ENCODE measurements at regions of chr6 and their contacts with region 1.

Region 1: GRCh38 chr6:158972241-158973233 is 27.5 kb downstream of the RSPH3 start:
- DNase-seq: peak; percentile 75
- ATAC-seq: peak; percentile 37
- H3K4me3 ChIP-seq: no peak overlapping the region
- H3K27ac ChIP-seq: no peak overlapping the region
- H3K4me1 ChIP-seq: peaks cover 4% of the 10 kb centered on the region; the same call in 1 of the 2 replicates
- H3K27me3 ChIP-seq: no peaks in the 10 kb centered on the region
- CTCF ChIP-seq: peak; percentile 66

Region 2: DNA sequence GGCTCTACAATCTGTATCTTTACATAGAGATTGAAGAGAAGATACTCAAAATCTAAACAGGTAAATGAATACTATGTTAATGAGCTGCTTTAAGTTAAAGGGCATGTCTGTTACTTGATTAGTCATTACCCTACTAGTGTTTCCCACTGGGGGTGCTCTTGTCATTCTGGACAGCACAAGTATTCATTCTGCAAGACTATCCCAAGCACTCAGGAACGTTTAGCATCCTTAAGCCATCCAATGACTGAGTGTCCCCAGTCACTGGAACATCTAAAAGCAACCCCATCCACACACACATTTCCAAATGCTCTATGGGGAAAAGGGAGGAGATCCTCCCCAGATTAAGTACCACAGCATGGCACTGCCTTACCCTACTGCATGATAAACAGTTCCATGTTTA is 179.1 kb before region 1 on chr6:
- CTCF ChIA-PET with region 1: interaction called, 3 read pairs
- POLR2A ChIA-PET with region 1: no interaction called
- intact Hi-C with region 1: loop called (anchors 1 kb)
- DNase-seq: peak; percentile 57
- ATAC-seq: peak; percentile 87
- H3K4me3 ChIP-seq: no peak overlapping the region
- H3K27ac ChIP-seq: no peak overlapping the region
- H3K4me1 ChIP-seq: no peaks in the 10 kb centered on the region
- H3K27me3 ChIP-seq: no peaks in the 10 kb centered on the region
- CTCF ChIP-seq: peak; percentile 50

Region 3: DNA sequence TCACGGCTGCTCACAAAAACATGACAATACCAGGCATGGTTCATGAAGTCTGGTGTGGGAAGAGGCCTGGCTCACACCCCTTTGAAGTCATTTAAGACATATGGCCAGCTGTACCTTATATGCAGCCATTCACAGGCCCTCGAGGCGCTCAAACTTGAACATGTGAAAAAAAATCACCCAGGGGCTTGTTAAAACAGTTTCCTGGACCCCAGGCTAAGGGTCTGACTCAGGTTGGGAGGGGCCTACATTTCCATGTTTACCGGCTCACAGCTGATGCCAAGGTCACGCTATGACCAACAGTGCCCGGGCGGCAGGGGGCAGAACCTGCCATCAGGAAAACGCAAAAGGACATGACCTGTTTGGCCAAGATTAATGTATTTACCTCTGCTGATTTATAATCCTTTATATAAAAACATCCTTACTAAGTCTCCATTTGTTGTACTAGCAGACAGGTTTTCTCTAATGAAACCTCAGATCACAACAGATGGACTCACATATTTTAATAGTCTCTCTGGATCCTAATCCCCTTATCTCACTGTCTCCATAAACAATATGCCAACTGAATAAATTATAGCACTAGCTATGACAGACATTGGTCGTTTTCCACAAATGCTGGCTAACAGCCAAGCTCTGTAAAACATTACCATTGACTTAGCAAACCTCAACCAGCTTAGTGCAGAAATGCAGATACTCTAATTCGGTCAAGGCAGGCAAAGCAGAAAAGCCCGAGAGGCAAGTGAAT is 173.3 kb before region 1 on chr6:
- CTCF ChIA-PET with region 1: interaction called, 3 read pairs
- POLR2A ChIA-PET with region 1: no interaction called
- intact Hi-C with region 1: loop called (anchors 2 kb)
- DNase-seq: peak; percentile 58
- ATAC-seq: peak; percentile 68
- H3K4me3 ChIP-seq: no peak overlapping the region
- H3K27ac ChIP-seq: peak overlapping the region; percentile 1; the same call in 1 of the 2 replicates
- H3K4me1 ChIP-seq: peaks cover 49% of the 10 kb centered on the region
- H3K27me3 ChIP-seq: no peaks in the 10 kb centered on the region
- CTCF ChIP-seq: 0 out of 2 replicates have a peak, but pooled peaks have one; percentile 32

Region 4: DNA sequence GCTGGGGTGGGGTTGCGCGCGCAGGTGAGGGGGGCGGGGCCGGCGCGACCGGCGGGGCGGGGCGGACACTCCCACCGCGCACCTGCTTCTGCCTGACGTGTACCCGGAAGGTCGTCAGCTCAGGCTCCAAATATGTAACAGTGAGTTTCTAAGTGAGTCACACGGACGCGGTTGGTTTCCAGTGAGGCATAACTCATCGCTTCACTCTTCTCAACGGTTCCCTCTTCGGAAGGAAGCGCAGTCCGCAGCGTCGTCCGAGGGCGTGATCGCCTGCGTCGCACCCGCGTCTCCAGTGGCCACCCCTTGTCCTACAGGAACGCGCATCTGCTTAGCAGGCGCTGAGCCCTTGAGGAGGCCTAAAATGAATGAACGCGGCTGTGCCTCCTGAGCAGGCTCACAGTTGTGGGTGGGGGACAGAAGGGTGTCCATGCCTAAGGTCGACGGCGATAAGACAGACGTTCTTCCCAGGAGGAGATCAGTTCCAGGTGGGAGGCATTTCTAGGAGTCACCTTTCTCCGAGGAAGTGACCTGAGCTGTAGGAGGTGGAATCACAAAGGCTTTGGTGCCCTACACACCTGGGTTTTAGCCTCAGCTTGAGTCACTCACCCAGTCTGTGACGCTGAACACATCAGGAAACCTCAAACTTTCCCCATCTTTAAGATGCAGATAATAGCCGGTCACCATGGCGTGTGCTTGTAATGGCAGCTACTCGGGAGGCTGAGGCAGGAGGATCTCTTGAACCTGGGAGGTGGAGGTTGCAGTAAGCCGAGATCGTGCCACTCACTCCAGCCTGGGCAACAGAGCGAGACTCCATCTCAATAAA is 102.5 kb before region 1 on chr6:
- CTCF ChIA-PET with region 1: no interaction called
- POLR2A ChIA-PET with region 1: interaction called, 5 read pairs
- intact Hi-C with region 1: loop called (anchors 5 kb)
- DNase-seq: peak; percentile 97
- ATAC-seq: peak; percentile 92
- H3K4me3 ChIP-seq: peak overlapping the region; percentile 26; the same call in 1 of the 2 replicates
- H3K27ac ChIP-seq: peak overlapping the region; percentile 93
- H3K4me1 ChIP-seq: peaks cover 19% of the 10 kb centered on the region
- H3K27me3 ChIP-seq: no peaks in the 10 kb centered on the region
- CTCF ChIP-seq: 0 out of 2 replicates have a peak, but pooled peaks have one; percentile 14

Region 5: GRCh38 chr6:159084493-159085091 is 112.1 kb after region 1 on chr6:
- CTCF ChIA-PET with region 1: no interaction called
- POLR2A ChIA-PET with region 1: no interaction called
- intact Hi-C with region 1: no loop called
- DNase-seq: no peak
- ATAC-seq: no peak
- H3K4me3 ChIP-seq: no peak overlapping the region
- H3K27ac ChIP-seq: no peak overlapping the region
- H3K4me1 ChIP-seq: no peaks in the 10 kb centered on the region
- H3K27me3 ChIP-seq: peaks cover 14% of the 10 kb centered on the region
- CTCF ChIP-seq: no peak